Activated T-helper 2 cell treated with anti-CD3 and anti-CD28 coated beads, Interferon-gamma antibody, Interleukin-2, Interleukin-4, amounts not matched to agents 10 μg/mL and 5 μg/mL and 100 μg/mL, durations not matched to agents 14 hours and 24 hours and 36 hours (primary cell): ENCODE measurements at regions of chr19 and their contacts with region 1.

Region 1: DNA sequence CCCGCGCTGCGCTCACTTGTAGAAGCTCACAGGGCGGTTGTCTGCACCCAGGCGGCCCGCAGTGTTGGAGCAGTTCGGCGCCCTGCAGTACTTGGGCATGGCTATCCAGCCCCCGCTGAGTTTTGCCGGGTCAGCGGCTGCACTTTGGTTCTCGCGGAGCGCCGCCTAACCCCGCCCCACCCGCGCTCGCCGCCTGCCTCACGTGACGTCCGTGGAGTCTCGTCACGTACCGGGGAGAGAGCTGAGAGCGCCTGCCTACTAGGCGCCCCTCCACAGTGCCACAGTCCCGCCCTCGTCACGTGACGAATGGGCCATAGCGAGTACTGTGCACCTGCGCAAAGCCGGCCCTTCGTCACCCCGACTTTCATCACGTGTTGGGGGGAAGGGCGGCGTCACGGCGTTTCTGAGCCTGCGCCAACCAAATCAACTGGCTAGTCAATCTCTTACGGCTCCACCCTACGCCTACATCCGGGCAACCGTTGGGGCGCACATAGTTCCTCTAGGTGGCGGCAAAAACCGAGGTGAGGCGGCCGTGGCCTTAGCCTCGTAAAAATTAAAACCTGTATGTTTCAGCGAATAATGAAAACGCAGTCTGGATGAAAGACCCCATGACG is at the start of gene THAP8:
- DNase-seq: peak; percentile 100
- H3K4me3 Mint-ChIP-seq: peak within 1 kb of the TSS; percentile 98
- H3K27ac Mint-ChIP-seq: peak within 1 kb of the TSS; percentile 96
- H3K4me1 Mint-ChIP-seq: peaks cover 20% of the 10 kb centered on the region
- H3K27me3 Mint-ChIP-seq: no peaks in the 10 kb centered on the region
- total RNA-seq, gene THAP8: 1.8 and 2.2 TPM in 2 replicates

Region 2: DNA sequence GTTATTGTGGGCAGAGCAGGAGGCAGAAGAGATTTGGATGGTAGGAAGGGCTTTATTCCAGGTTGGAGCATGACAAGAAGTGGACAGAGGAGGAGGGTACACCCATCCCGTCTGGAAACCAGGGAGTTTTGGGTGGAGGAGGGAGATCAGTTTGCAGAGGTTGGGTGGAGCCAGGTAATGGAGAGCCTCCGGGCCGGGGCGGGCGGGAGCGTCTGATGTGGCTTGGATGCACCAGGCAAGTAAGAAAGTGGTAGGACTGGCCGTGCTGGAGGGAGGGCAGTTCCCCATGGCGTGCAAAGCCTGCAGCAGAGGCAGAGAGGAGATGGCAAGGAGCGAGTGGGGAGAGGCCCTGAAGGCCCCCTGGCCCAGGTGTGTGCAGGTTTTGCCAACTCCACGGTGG is 322.9 kb before region 1 on chr19:
- intact Hi-C with region 1: no loop called
- DNase-seq: no peak
- H3K4me3 Mint-ChIP-seq: no peak overlapping the region
- H3K27ac Mint-ChIP-seq: no peak overlapping the region
- H3K4me1 Mint-ChIP-seq: peaks cover under 1% of the 10 kb centered on the region
- H3K27me3 Mint-ChIP-seq: no peaks in the 10 kb centered on the region

Region 3: GRCh38 chr19:35959040-35959967 is 94.9 kb before region 1 on chr19:
- intact Hi-C with region 1: loop called (anchors 1 kb)
- DNase-seq: peak; percentile 64
- H3K4me3 Mint-ChIP-seq: no peak overlapping the region
- H3K27ac Mint-ChIP-seq: no peak overlapping the region
- H3K4me1 Mint-ChIP-seq: peaks cover 8% of the 10 kb centered on the region
- H3K27me3 Mint-ChIP-seq: peaks cover 22% of the 10 kb centered on the region

Region 4: DNA sequence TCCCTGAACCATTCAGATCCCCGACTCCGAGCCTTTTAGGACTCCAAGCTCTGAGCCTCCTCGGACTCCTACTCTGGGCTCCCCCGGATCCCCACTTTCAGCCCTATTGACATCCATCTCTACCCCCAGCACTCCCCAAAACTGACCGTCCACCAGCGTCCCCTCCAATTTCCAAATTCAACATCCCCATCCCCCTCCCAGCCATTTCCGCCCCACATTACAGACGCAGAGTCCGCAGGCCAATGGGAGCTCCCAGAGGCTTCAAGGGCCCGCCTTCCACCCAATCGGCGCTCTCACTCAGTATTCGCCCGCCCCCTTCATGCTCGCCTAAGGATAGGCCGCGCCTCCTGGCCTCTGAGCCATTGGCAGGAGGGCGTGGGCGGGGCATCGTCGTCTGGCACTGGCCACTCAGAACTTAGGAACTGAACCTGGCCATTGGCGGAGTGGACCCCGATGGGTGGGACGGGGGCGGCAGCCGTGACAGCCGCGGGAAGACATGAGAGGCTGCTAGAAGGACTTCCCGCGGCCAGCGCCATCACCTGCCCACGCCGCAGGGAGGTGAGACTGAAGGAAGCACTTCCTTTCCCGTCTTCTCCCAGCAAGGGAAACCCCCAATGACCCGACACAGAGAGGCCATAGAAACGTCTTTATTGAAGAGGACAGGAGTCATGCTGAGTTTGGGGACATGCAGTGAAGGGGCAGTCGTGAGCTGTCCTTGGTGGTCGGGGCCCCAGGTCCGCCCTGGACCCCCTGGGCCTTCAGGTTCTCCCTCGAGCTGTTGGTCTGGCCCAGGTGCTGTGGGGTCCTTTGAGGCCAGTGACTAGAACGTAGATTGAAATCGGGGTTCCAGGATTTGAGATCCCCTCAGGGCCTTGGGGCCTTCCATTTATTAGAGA is 39.9 kb before region 1 on chr19 and contains the start of gene ALKBH6:
- intact Hi-C with region 1: loop called (anchors 1 kb)
- DNase-seq: peak; percentile 99
- H3K4me3 Mint-ChIP-seq: peak within 1 kb of the TSS; percentile 93
- H3K27ac Mint-ChIP-seq: peak within 1 kb of the TSS; percentile 92
- H3K4me1 Mint-ChIP-seq: peaks cover 33% of the 10 kb centered on the region
- H3K27me3 Mint-ChIP-seq: no peaks in the 10 kb centered on the region
- total RNA-seq, gene ALKBH6: 49.9 and 54.3 TPM in 2 replicates